Gastrocnemius medialis (tissue), 4 donors: ENCODE measurements at regions of chr12 and their contacts with region 1.

Region 1: GRCh38 chr12:132153501-132154340 is 9.5 kb downstream of the NOC4L start:
- DNase-seq: no peak
- ATAC-seq: peak; percentile 56 to 80
- H3K4me3 ChIP-seq: peak overlapping the region in 3 of 4 donors; percentile 27 to 48 (median 32)
- H3K27ac ChIP-seq: no peak overlapping the region
- H3K4me1 ChIP-seq: peaks cover 0 to 5% of the 10 kb centered on the region in 2 donors
- H3K27me3 ChIP-seq: no peaks in the 10 kb centered on the region
- CTCF ChIP-seq: peak; percentile 60 to 94 (median 83)
- POLR2A ChIP-seq: no peak

Region 2: DNA sequence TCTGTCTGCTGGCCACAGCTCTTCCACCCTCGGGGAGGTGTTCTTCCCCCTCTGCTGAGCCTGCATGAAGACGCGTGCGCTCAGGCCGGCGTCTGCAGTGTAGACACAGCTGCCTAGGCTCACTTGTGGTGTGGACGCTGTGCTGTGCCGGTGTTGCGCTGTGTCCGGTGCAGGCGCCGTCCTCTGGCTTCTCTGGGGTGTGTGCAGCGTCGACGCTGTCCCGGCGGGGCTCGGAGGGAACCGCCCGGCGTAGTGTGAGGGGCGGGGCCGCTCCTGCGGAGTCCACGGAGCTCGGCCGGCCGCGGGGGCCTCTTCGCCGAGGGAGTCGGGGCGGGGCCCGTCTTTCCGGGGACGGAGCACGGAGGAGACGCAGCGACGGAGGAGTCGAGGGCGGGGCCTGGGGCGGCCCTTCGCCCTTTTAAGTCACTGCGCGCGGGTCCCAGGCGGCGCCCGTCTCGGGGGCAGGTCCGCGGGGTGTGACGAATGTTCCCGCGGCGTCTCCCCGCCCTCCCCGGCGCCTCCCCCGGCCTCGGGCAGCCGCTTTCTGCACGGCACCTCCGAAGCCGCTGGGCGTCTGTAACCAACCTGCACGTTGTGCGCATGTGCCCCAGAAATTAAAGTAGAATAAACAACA is 35.8 kb after region 1 on chr12:
- in situ Hi-C with region 1: no loop called
- intact Hi-C with region 1: loop called (anchors 2 kb)
- DNase-seq: peak; percentile 51 to 62
- ATAC-seq: peak; percentile 66 to 69
- H3K4me3 ChIP-seq: peak overlapping the region; percentile 56 to 65 (median 64)
- H3K27ac ChIP-seq: peak overlapping the region; percentile 31 to 77 (median 58)
- H3K4me1 ChIP-seq: peaks cover 0 to 7% of the 10 kb centered on the region in 2 donors
- H3K27me3 ChIP-seq: peaks cover 0 to 56% (median 44%) of the 10 kb centered on the region in 3 donors
- CTCF ChIP-seq: no peak
- POLR2A ChIP-seq: peak; percentile 33 to 67

Region 3: DNA sequence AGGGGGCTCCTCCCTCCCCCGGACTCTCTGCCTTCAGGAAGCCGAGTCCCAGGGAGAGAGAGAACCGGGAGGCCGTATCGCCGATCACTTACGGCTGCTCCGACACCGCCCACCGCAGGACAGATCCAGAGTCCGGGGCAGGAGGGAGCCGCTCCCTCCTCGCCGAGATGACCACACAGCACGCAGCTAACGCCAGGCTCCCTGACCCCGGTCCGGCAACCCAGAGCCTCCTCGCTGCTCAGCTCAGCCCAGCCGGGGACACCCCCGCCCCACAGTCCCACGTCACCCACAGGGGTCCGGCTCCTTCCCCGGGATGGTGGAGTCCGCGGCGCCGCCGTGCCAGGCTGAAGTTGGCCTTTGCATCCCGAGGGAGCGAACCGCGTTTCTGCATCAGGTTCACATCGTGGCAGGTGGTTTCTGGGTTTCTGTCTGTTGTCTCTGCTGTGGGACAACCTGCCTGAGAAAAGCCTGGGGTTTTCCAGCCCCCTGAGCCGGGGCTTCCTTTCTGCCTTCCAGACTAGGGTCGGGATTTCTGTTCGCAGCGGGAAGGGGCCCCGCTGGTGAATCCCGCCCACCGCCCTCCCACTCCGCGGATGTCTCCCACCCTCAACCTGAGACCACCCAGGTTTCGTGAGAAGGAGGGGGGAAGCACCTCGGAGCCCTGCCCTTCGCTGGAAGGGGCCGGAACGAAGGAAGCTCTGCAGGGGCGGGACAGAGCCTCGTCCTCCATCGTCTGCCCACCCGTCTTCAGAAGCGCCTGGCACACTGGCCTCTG is 51.7 kb after region 1 on chr12:
- in situ Hi-C with region 1: no loop called
- intact Hi-C with region 1: loop called (anchors 5 kb)
- DNase-seq: no peak
- ATAC-seq: no peak
- H3K4me3 ChIP-seq: peak overlapping the region in 1 of 4 donors; percentile 6
- H3K27ac ChIP-seq: no peak overlapping the region
- H3K4me1 ChIP-seq: peaks cover 0 to 8% of the 10 kb centered on the region in 2 donors
- H3K27me3 ChIP-seq: peaks cover 52 to 77% (median 57%) of the 10 kb centered on the region in 3 donors
- CTCF ChIP-seq: no peak
- POLR2A ChIP-seq: no peak

Region 4: DNA sequence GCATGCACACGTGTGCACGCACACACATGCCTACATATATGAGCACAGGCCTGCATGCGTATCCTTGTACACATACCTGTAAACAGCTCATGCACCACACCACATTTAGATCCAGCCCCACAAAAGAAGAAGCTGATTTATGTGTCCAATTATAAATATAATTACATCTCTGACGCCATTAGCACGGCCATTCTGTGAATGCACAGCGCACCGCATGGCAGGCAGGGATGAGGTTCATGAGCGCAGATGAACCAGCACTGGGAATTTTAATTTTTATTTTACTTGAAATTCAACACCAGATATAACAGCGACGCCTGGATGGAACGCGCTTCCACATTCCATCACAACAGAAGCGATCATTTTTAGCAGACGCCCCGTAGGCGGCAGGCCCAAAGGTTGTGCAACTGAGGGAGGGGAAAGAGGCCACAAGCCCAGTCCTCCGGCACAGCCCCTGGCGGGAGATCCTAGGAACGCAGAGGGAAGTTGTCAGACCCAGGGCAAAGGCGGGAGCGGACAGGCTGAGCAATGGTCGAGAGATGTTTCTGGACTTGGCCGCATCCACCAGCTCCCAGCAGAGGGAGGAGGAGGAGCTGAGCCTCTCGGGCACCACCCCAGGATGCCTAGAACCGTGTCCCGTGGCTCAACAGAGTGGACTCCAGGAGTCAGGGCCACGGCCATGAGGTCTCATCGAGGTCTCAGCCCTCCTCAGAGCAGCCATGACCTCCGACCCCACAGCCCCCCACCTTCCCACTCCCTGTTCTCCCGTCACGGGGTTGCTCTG is 213.5 kb after region 1 on chr12:
- in situ Hi-C with region 1: no loop called
- intact Hi-C with region 1: no loop called
- DNase-seq: no peak
- ATAC-seq: no peak
- H3K4me3 ChIP-seq: no peak overlapping the region
- H3K27ac ChIP-seq: no peak overlapping the region
- H3K4me1 ChIP-seq: no peaks in the 10 kb centered on the region
- H3K27me3 ChIP-seq: peaks cover 31 to 38% (median 38%) of the 10 kb centered on the region in 3 donors
- CTCF ChIP-seq: no peak
- POLR2A ChIP-seq: no peak

Region 5: DNA sequence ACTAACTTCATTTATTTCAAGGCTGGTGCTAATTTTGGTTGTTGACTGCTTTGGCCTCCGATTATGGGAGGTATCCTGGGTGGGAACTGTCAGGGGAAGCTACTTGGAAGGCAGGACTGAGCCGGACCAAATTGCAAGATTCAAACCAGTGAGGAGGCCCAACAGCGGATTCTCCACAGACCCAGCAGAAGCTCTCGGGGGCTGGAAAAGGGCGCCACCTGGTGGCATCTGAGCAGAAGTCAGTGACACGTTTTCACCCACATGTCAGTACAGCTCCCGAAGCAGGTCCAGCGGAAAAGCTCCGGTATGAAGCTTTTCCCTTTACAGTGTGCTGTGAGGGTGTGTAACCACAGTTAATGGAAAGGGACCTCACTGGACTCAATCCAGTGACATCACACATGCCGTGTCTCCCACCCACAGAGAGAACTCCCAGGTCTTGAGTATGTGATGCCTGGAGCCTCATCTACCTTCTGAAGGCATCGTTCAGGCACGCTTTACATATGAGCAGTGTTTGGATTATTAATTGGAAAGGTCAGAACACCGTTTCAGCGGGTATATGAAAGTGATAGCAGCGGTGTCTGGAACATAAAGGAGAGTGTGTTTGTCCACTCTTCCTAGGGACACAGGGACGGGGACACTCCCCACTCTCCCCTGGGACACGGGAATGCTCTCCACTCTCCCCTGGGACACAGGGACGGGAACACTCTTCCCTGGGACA is 461.3 kb after region 1 on chr12:
- in situ Hi-C with region 1: no loop called
- intact Hi-C with region 1: loop called (anchors 5 kb)
- DNase-seq: peak; percentile 43 to 46
- ATAC-seq: peak; percentile 49 to 77
- H3K4me3 ChIP-seq: no peak overlapping the region
- H3K27ac ChIP-seq: no peak overlapping the region
- H3K4me1 ChIP-seq: no peaks in the 10 kb centered on the region
- H3K27me3 ChIP-seq: peaks cover 39 to 77% (median 58%) of the 10 kb centered on the region in 3 donors
- CTCF ChIP-seq: peak; percentile 41 to 79 (median 73)
- POLR2A ChIP-seq: no peak